Lower leg skin (tissue), 4 donors: ENCODE measurements at regions of chr10 and their contacts with region 1.

Region 1: DNA sequence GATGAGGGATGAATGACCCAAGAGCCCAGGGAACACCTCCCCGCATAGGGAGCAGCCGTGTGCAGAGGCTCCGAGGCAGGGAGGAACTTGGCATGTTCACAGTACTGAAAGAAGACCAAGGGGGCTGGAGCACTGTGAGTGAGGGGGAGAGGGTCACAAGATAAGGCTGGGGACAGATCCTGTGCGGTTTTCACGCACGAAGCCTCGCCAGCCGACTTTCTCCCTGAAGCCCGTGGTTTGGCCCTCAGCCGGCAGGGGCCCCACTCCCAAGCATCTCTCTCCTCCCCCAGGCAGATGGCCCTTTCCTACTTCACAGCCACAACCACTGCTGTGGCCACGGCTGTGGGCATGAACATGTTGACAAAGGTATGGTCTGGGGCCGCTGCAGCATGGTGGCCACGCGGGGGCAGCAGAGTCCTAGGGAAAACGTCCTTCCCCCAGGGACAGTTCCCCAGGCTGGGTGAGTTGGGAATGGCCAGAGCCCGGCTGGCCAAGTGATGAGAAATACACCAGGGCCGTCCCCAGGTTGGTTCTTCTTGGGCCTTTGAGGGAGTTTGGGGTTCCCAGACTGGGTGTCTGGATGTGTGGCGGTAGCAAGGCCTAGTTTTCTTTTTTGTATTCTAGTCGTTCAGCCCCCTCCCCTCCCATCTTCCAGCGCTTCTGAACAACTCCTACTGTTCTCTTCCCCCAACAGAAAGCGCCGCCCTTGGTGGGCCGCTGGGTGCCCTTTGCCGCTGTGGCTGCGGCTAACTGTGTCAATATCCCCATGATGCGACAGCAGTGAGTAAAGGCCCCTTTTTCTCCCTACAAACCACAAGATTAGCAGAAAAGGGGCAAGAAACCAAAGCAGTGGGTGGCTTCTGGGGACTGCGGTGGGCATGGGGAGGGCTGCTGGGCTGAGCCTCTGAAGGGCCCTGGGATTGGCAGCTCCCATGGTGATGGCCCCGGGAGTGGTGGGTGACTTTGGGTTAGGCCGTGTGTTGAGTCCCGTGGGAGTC is 14.4 kb upstream of the WBP1L start:
- DNase-seq: peak; percentile 67 to 97
- H3K4me3 ChIP-seq: no peak overlapping the region
- CTCF ChIP-seq: peak in 1 of 3 donors; percentile 86
- POLR2A ChIP-seq: no peak

Region 2: DNA sequence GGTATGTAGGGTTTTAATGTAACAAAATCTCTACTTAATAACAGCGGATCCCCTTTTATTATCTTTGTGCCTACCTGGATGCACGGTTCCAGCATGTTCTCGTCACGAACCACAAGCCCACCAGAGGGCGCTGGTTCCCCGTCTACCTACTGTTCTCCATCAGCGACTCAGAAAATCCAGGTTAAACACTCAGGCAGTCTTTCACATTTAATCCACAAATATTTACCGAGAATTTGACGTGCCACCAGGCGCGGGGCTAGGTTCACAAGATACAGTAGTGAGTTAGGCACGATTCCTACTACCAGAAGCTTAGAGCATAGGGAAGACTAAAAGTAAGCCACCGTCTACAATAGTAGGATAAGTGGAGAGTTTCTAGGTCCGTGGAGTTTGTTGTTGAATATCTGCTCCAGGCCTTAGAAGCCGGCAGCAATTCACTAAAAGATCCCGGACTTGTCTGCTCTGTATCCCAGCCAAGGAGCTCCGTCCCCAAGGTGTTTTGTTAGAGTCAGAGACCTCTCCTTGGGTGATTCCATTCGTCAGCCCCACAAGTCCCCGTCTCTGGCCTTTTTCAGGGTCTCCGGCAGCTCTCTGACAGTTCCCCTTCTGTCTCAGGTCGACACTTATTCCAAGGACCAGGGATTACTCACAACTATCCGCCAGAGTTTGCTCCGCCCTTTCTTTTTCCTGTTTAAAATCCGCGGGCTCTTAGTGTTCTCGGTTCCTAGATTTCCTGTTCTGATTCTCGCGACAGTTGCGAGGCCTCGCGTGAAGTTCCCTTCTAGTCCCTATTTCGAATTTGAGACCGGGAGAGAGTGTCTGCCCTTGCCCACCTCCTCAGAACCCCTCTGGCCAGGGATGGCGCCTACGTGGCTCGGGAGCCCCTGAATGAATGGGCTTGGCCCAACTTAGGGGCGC is 1669.0 kb before region 1 on chr10:
- intact Hi-C with region 1: no loop called
- DNase-seq: peak; percentile 93 to 98
- H3K4me3 ChIP-seq: peak overlapping the region; percentile 43
- CTCF ChIP-seq: peak in 1 of 3 donors; percentile 55
- POLR2A ChIP-seq: no peak

Region 3: GRCh38 chr10:102583435-102584417 is 145.6 kb before region 1 on chr10:
- intact Hi-C with region 1: no loop called
- DNase-seq: peak; percentile 84 to 96
- H3K4me3 ChIP-seq: no peak overlapping the region
- CTCF ChIP-seq: peak in 1 of 3 donors; percentile 59
- POLR2A ChIP-seq: no peak

Region 4: DNA sequence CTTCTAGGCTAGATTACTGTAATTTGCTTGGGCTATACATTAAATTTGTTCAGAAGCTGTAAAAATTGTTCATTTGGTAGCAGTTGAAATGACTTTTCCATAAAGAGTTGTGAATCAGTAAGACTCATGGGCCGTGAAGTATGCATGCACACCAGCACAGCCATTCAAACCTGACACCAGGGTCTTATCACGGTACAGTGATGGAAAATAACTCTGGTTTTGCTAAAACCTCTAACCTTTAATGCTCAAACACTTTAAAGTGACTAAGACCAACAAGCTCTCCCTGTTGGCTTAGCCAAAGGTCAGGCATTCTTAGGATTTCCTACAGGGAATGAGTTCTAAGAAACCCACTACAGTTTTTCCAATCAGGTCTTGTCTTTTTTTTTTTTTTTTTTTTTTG is 26.6 kb before region 1 on chr10:
- intact Hi-C with region 1: loop called (anchors 1 kb)
- DNase-seq: no peak
- H3K4me3 ChIP-seq: no peak overlapping the region
- CTCF ChIP-seq: no peak
- POLR2A ChIP-seq: no peak

Region 5: DNA sequence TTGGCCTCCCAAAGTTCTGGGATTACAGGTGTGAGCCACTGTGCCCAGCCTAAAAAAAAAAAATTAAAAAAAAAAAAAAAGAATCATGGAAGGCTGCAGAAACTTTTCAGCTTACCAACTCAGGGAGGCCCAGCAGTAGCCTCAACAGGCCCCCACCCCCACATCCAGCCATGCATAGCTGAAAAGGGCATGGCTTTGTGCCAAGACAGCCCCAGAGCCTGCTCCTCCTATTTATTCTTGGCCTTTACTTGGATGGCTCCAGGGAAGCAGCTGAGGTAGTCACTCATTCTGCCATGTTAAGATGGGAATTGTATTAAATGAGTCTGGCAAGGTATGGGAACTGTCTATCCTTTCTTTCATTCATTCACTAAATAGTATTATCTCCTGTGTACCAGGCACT is 175.0 kb after region 1 on chr10:
- intact Hi-C with region 1: loop called (anchors 5 kb)
- DNase-seq: no peak
- H3K4me3 ChIP-seq: no peak overlapping the region
- CTCF ChIP-seq: no peak
- POLR2A ChIP-seq: no peak